ENCODE measurements at regions of chr3 and their contacts with region 1.

Region 1: GRCh38 chr3:58324391-58325390 is 8.0 kb upstream of the PXK start:
- DNase-seq: no peak
- ATAC-seq: peak; percentile 59
- H3K4me3 ChIP-seq: no peak overlapping the region
- H3K27ac ChIP-seq: no peak overlapping the region; the same call in 1 of the 2 replicates
- H3K4me1 ChIP-seq: peaks cover 17% of the 10 kb centered on the region
- H3K27me3 ChIP-seq: no peaks in the 10 kb centered on the region
- CTCF ChIP-seq: no peak
- EP300 ChIP-seq: no peak
- POLR2A ChIP-seq: no peak
- RAD21 ChIP-seq: no peak

Region 2: GRCh38 chr3:58341376-58341775 is 16.7 kb after region 1 on chr3:
- CTCF ChIA-PET with region 1: interaction called, 15 read pairs
- POLR2A ChIA-PET with region 1: interaction called, 6 read pairs
- RAD21 ChIA-PET with region 1: interaction called, 6 read pairs
- SMC1A ChIA-PET with region 1: interaction called, 26 read pairs
- in situ Hi-C with region 1: no loop called
- intact Hi-C with region 1: no loop called
- DNase-seq: no peak
- ATAC-seq: no peak; the same call in 2 of the 3 replicates
- H3K4me3 ChIP-seq: no peak overlapping the region
- H3K27ac ChIP-seq: no peak overlapping the region
- H3K4me1 ChIP-seq: peaks cover 4% of the 10 kb centered on the region; the same call in 1 of the 2 replicates
- H3K27me3 ChIP-seq: no peaks in the 10 kb centered on the region
- CTCF ChIP-seq: no peak
- EP300 ChIP-seq: no peak
- POLR2A ChIP-seq: no peak
- RAD21 ChIP-seq: no peak

Region 3: GRCh38 chr3:58349792-58350626 is 25.3 kb after region 1 on chr3:
- CTCF ChIA-PET with region 1: interaction called, 10 read pairs
- POLR2A ChIA-PET with region 1: interaction called, 3 read pairs
- RAD21 ChIA-PET with region 1: interaction called, 7 read pairs
- SMC1A ChIA-PET with region 1: interaction called, 16 read pairs
- in situ Hi-C with region 1: no loop called
- intact Hi-C with region 1: no loop called
- DNase-seq: peak; percentile 87
- ATAC-seq: peak; percentile 88
- H3K4me3 ChIP-seq: peak overlapping the region; percentile 9; the same call in 1 of the 2 replicates
- H3K27ac ChIP-seq: peak overlapping the region; percentile 85
- H3K4me1 ChIP-seq: peaks cover 55% of the 10 kb centered on the region
- H3K27me3 ChIP-seq: no peaks in the 10 kb centered on the region
- CTCF ChIP-seq: no peak
- EP300 ChIP-seq: 0 out of 4 replicates have a peak, but pooled peaks of 1 of the 2 experiments have one; percentile 18
- POLR2A ChIP-seq: peak; percentile 60
- RAD21 ChIP-seq: no peak